ENCODE measurements at regions of chr9 and their contacts with region 1.

Region 1: DNA sequence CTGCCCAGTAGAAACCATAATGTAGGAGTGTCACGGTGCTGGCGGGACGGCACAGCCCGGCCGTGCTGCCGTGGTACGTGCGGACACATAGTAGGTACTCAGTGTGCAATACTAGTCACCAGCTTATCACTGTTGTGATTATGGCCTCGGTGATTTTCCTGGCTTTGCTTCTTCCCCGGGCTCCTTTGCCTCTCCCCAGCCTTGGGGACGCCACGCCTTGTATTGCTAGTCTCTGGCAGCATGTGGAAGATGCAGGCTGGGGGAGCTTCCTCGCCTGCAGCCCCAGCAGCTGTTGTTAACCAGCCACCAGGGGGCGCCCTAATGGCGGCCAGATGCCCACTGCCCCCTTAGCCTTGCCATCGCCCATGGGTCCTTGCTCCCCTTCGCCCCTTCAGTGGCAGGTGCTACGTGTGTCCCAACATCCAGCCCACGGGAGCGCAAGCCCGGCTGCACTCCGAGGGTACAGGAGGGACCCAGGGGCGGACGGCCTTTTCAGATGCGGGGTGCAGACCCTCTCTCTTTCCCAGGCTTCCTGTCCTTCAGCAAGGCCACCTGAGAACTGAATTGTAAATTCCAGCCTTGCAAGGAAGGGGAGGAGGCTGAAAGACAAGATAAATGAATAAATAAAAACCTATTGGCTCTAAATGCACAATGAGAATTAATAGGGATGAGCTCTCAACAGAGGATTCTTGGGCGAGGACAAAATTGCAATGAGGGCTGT is 8.0 kb downstream of the NTNG2 start:
- DNase-seq: peak; percentile 83
- ATAC-seq: peak; percentile 71
- H3K4me3 Mint-ChIP-seq: no peak overlapping the region
- H3K27ac Mint-ChIP-seq: no peak overlapping the region
- H3K4me1 Mint-ChIP-seq: peaks cover 16% of the 10 kb centered on the region
- H3K27me3 Mint-ChIP-seq: peaks cover 23% of the 10 kb centered on the region
- CTCF ChIP-seq: peak; percentile 97

Region 2: GRCh38 chr9:132079391-132080091 is 90.3 kb before region 1 on chr9 and contains the start of gene MED27:
- CTCF ChIA-PET with region 1: no interaction called
- POLR2A ChIA-PET with region 1: no interaction called
- DNase-seq: peak; percentile 93
- ATAC-seq: peak; percentile 96
- H3K4me3 Mint-ChIP-seq: peak within 1 kb of the TSS; percentile 95
- H3K27ac Mint-ChIP-seq: peak within 1 kb of the TSS; percentile 88
- H3K4me1 Mint-ChIP-seq: peaks cover 17% of the 10 kb centered on the region
- H3K27me3 Mint-ChIP-seq: no peaks in the 10 kb centered on the region; the same call in 1 of the 2 replicates
- CTCF ChIP-seq: no peak
- total RNA-seq, gene MED27: 26.6 to 27.9 TPM (median 27.5 TPM) in 3 replicates

Region 3: GRCh38 chr9:132114102-132114707 is 55.6 kb before region 1 on chr9:
- CTCF ChIA-PET with region 1: interaction called, 10 read pairs
- POLR2A ChIA-PET with region 1: no interaction called
- DNase-seq: peak; percentile 87
- ATAC-seq: peak; percentile 94
- H3K4me3 Mint-ChIP-seq: no peak overlapping the region
- H3K27ac Mint-ChIP-seq: no peak overlapping the region
- H3K4me1 Mint-ChIP-seq: no peaks in the 10 kb centered on the region; the same call in 1 of the 2 replicates
- H3K27me3 Mint-ChIP-seq: peaks cover 13% of the 10 kb centered on the region
- CTCF ChIP-seq: no peak

Region 4: GRCh38 chr9:132182314-132183091 is 12.7 kb after region 1 on chr9:
- CTCF ChIA-PET with region 1: interaction called, 59 read pairs
- POLR2A ChIA-PET with region 1: interaction called, 3 read pairs
- DNase-seq: no peak
- ATAC-seq: peak; percentile 62
- H3K4me3 Mint-ChIP-seq: no peak overlapping the region
- H3K27ac Mint-ChIP-seq: no peak overlapping the region
- H3K4me1 Mint-ChIP-seq: peaks cover 49% of the 10 kb centered on the region
- H3K27me3 Mint-ChIP-seq: peaks cover 22% of the 10 kb centered on the region
- CTCF ChIP-seq: no peak

Region 5: GRCh38 chr9:132214027-132214622 is 44.3 kb after region 1 on chr9:
- CTCF ChIA-PET with region 1: interaction called, 21 read pairs
- POLR2A ChIA-PET with region 1: no interaction called
- DNase-seq: peak; percentile 64
- ATAC-seq: peak; percentile 91
- H3K4me3 Mint-ChIP-seq: no peak overlapping the region
- H3K27ac Mint-ChIP-seq: no peak overlapping the region
- H3K4me1 Mint-ChIP-seq: peaks cover 4% of the 10 kb centered on the region; the same call in 1 of the 2 replicates
- H3K27me3 Mint-ChIP-seq: no peaks in the 10 kb centered on the region
- CTCF ChIP-seq: no peak

Region 6: DNA sequence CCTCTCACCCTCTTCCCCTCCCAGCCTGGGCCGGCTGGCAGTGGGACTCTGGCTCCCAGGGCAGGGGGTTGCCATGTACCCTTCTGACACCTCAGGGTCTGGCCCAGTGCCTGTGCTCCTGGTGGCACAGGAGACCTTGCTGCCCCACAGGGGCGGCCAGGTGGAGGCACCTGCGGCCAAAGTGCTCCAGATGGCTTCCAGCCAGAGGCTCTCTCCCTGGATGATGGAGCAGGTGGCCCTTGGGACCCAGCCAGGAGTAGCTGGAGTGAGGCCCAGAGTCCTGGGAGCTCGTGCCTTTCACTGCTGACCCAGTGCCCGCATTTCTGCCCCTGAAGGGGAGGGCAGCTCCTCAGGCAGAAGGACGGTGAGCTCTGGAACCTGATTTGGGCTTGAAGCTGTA is 79.3 kb after region 1 on chr9:
- CTCF ChIA-PET with region 1: interaction called, 40 read pairs
- POLR2A ChIA-PET with region 1: no interaction called
- DNase-seq: no peak
- ATAC-seq: no peak
- H3K4me3 Mint-ChIP-seq: no peak overlapping the region
- H3K27ac Mint-ChIP-seq: no peak overlapping the region
- H3K4me1 Mint-ChIP-seq: peaks cover 13% of the 10 kb centered on the region
- H3K27me3 Mint-ChIP-seq: peaks cover 20% of the 10 kb centered on the region
- CTCF ChIP-seq: no peak